ENCODE measurements at regions of chr1 and their contacts with region 1.

Region 1: GRCh38 chr1:203038891-203039608 is 12.8 kb downstream of the PPFIA4 start:
- DNase-seq: peak; percentile 65 to 94 (median 86)

Region 2: DNA sequence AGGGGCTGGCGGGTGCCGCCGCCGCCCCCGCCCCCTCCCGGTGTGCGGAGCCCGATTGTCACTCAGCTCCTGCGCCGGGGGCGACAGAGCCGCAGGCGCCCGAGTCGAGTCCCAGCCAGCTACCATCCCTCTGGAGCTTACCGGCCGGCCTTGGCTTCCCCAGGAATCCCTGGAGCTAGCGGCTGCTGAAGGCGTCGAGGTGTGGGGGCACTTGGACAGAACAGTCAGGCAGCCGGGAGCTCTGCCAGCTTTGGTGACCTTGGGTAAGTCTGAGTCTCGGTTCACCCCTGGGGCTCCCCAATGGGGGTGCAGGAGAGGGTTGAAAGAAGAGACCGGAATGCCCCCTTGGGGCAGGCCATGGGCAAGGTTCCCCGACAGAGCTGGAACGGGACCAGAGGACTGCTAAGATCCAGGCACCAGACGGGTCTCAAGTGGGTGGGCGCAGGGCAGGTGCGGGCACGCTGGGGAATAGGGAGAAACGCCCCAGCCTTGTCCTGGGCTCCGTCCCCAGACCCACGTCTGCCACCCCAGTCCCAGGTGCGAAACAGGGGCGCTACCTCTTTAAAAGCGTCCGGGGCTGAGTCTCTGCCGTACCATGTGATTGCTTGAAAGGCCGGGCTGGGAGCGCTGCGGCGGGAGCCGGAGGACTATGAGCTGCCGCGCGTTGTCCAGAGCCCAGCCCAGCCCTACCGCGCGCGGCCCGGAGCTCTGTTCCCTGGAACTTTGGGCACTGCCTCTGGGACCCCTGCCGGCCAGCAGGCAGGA is 88.8 kb after region 1 on chr1 and contains the start of gene ADORA1:
- intact Hi-C with region 1: loop called (anchors 5 kb)
- DNase-seq: peak; percentile 78 to 95 (median 88)

Region 3: GRCh38 chr1:203216274-203217138 is 177.5 kb after region 1 on chr1:
- intact Hi-C with region 1: loop called (anchors 2 kb)
- DNase-seq: peak in 41 of 42 donors; percentile 18 to 89 (median 70)

Region 4: GRCh38 chr1:203267347-203267846 is 228.3 kb after region 1 on chr1:
- intact Hi-C with region 1: loop called (anchors 5 kb)
- DNase-seq: peak in 41 of 42 donors; percentile 72 to 94 (median 84)